ENCODE measurements at regions of chr9 and their contacts with region 1.

Region 1: DNA sequence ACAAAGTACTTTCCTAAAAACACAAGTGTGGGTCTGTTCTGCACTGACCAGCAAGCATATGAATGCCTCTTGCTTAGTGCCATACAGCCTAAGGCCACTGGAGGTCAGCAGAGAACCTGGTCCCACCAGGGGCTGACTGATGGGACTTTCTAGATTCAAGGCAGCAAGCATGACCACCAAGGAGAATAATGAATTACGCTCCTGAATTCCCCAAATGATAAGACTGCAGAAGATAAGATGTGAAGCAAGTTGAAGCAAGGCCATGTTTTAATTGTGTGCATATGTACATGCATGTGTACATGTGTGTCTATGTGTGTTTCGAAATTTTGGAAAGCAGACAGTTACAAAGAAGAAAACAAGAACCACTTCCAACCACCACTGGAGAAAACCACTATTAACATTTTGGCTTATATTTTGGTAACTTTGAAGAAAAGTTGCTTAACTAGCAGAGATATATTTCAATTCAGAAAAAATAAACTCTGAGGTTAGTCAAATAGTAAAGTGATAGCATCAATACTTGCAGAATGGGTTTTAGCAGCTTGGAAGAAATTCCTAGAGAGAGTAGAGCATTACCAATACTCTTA is 70.5 kb downstream of the ERP44 start:
- DNase-seq: peak; percentile 21 to 66 (median 45)
- ATAC-seq: peak; percentile 98
- H3K4me3 ChIP-seq: no peak overlapping the region
- H3K4me3 Mint-ChIP-seq: no peak overlapping the region
- H3K27ac ChIP-seq: no peak overlapping the region
- H3K27ac Mint-ChIP-seq: peak overlapping the region in 1 of 9 donors; percentile 0
- H3K4me1 ChIP-seq: no peaks in the 10 kb centered on the region
- H3K4me1 Mint-ChIP-seq: peaks cover 4 to 12% (median 9%) of the 10 kb centered on the region in 7 donors
- H3K27me3 ChIP-seq: no peaks in the 10 kb centered on the region
- H3K27me3 Mint-ChIP-seq: no peaks in the 10 kb centered on the region

Region 2: DNA sequence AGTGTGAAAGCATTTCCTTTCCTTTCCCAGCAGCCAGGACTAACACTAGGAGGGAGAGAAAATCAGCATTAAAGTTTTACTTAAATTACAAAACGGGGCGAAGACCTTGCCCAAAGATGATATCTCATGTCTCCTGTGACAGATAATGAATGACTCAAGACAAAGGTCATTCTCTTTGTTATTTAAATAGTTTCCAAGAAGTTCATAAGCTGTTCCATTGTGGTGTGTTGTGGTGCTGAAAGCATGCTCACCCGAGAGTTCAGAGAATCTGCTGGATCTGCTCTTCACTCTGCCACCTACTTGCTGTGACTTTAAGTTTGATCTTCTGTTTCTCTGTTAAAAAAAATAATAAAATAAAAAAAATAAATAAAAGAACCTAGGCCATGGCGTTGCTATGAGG is 472.5 kb before region 1 on chr9:
- CTCF ChIA-PET with region 1: no interaction called
- POLR2A ChIA-PET with region 1: no interaction called
- intact Hi-C with region 1: no loop called
- DNase-seq: no peak
- ATAC-seq: no peak
- H3K4me3 ChIP-seq: no peak overlapping the region
- H3K4me3 Mint-ChIP-seq: no peak overlapping the region
- H3K27ac ChIP-seq: no peak overlapping the region
- H3K27ac Mint-ChIP-seq: no peak overlapping the region
- H3K4me1 ChIP-seq: no peaks in the 10 kb centered on the region
- H3K4me1 Mint-ChIP-seq: no peaks in the 10 kb centered on the region
- H3K27me3 ChIP-seq: no peaks in the 10 kb centered on the region
- H3K27me3 Mint-ChIP-seq: peaks cover 16 to 32% (median 27%) of the 10 kb centered on the region in 5 donors

Region 3: GRCh38 chr9:99650187-99650874 is 378.0 kb before region 1 on chr9:
- CTCF ChIA-PET with region 1: no interaction called
- POLR2A ChIA-PET with region 1: no interaction called
- intact Hi-C with region 1: no loop called
- DNase-seq: no peak
- ATAC-seq: no peak
- H3K4me3 ChIP-seq: no peak overlapping the region
- H3K4me3 Mint-ChIP-seq: no peak overlapping the region
- H3K27ac ChIP-seq: no peak overlapping the region
- H3K27ac Mint-ChIP-seq: no peak overlapping the region
- H3K4me1 ChIP-seq: no peaks in the 10 kb centered on the region
- H3K4me1 Mint-ChIP-seq: peaks cover 0 to 2% (median 0%) of the 10 kb centered on the region in 7 donors
- H3K27me3 ChIP-seq: no peaks in the 10 kb centered on the region
- H3K27me3 Mint-ChIP-seq: peaks cover 8 to 27% (median 16%) of the 10 kb centered on the region in 5 donors

Region 4: DNA sequence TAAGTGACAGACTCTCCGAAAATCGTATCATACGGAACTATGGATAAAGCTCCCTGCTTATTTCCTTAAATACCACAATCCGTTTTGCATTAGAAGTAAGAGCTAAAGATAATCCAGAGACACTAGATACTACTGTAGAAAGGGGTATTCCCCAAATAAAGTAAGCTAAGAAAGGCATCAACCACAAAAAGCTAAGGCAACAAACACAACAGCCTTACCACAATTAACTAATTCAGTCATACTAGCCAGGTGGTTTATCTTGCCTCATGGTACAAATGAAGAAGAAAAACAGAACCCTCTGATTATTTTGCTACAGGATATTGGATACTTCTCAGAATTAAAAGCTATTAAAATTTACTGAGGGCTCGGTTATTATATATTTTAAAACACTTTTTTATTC is 56.4 kb after region 1 on chr9:
- CTCF ChIA-PET with region 1: no interaction called
- POLR2A ChIA-PET with region 1: no interaction called
- intact Hi-C with region 1: loop called in 1 of 2 experiments (anchors 5 kb)
- DNase-seq: peak in 3 of 9 donors; percentile 2 to 18 (median 3)
- ATAC-seq: peak; percentile 80
- H3K4me3 ChIP-seq: no peak overlapping the region
- H3K4me3 Mint-ChIP-seq: peak overlapping the region in 1 of 10 donors; percentile 2
- H3K27ac ChIP-seq: no peak overlapping the region
- H3K27ac Mint-ChIP-seq: no peak overlapping the region
- H3K4me1 ChIP-seq: peaks cover 38 to 43% of the 10 kb centered on the region in 2 donors
- H3K4me1 Mint-ChIP-seq: peaks cover 48 to 90% (median 83%) of the 10 kb centered on the region in 7 donors
- H3K27me3 ChIP-seq: no peaks in the 10 kb centered on the region
- H3K27me3 Mint-ChIP-seq: no peaks in the 10 kb centered on the region

Region 5: DNA sequence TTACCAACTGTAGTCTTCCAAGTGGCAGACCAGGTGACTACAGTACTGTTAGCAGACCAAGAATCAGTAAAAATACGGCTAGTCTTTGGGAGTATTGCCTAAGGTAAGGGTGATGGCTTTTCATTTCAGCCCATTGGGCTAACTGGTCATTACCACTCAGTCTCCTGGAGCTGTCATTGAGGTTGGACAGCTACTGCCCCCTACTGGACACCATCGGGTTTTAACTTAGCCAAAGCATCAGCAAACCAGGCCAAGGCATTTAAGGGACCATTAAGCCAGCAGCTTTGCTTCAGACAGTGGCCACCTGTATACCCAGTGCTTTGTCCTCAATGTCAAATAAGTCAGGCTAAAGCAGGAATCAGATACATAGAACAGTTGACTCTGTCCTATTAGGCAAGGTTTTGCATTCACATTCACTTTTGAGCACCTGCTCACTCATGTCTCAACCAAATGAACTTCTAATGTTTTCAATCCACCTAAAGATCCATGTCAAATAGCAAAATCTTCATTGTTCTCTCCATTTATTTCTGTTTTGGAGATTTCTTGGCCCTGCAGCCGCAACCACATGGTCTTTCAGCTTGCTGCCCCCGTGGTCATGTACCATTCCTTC is 188.0 kb after region 1 on chr9:
- CTCF ChIA-PET with region 1: no interaction called
- POLR2A ChIA-PET with region 1: no interaction called
- intact Hi-C with region 1: loop called (anchors 1 kb)
- DNase-seq: peak; percentile 17 to 53 (median 41)
- ATAC-seq: peak; percentile 84
- H3K4me3 ChIP-seq: no peak overlapping the region
- H3K4me3 Mint-ChIP-seq: no peak overlapping the region
- H3K27ac ChIP-seq: no peak overlapping the region
- H3K27ac Mint-ChIP-seq: no peak overlapping the region
- H3K4me1 ChIP-seq: no peaks in the 10 kb centered on the region
- H3K4me1 Mint-ChIP-seq: peaks cover 0 to 9% (median 0%) of the 10 kb centered on the region in 7 donors
- H3K27me3 ChIP-seq: no peaks in the 10 kb centered on the region
- H3K27me3 Mint-ChIP-seq: no peaks in the 10 kb centered on the region

Measured in naive thymus-derived CD4-positive, alpha-beta T cell (primary cell).